ENCODE measurements at regions of chr2 and their contacts with region 1.

Region 1: DNA sequence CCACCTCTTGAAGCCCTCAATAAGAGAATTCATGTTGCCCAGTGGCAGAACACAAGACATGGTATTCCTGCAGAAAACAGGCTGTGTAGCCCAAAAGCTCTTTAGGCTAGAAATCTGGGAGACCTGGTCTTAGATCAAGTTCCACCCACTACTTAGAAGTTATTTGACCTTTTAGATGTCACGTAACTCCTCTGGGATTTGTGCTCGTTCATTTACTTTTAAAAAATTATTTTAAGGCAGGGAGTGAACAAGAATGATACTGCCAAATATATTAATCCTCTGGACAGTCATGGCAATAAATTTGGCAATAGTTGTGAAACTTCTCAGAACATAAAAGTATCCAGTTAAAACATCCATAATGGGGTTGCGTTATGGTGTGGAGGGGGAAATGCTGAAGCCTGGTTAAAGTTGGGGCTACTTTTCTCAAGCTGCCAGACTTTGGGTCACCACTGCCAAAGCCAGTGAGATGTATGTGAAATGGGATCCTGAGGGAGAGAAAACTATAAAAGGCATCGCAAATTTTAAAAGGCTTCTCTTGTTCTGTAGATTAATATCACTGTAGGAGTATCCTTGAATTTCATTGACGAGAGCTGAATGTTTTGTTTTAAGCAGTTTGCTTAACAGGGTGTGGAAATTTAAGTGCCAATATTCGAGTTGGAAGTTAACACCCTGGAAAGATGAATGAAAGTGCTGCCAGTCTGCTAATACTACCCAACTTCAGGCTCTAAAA is 15.8 kb downstream of the DAPL1 start:
- DNase-seq: no peak
- H3K4me3 ChIP-seq: no peak overlapping the region
- H3K27ac ChIP-seq: no peak overlapping the region
- H3K4me1 ChIP-seq: peaks cover 0 to 22% of the 10 kb centered on the region in 2 donors
- H3K27me3 ChIP-seq: no peaks in the 10 kb centered on the region
- CTCF ChIP-seq: no peak

Region 2: DNA sequence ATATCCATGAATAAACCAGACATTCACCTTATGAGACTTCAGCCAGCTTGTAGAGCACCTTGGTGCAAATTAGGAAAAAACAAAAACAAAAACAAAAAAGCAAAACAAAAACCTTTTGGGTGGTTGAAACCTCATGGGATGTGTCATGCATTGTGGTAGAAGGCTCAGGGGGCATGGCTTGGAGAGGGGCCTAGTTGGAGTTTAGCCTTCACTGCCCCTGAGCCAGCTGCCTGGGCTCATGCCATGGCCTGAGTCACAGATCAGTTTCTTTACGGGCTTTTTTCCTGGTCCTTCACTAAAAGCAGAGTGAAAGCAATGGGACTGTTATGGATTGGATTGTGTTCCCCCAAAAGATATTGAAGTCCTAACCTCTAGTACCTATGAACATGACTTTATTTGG is 37.8 kb before region 1 on chr2:
- intact Hi-C with region 1: loop called (anchors 5 kb)
- DNase-seq: peak in 1 of 2 donors; percentile 83
- H3K4me3 ChIP-seq: no peak overlapping the region
- H3K27ac ChIP-seq: peak overlapping the region; percentile 54 to 69
- H3K4me1 ChIP-seq: peaks cover 8 to 40% of the 10 kb centered on the region in 2 donors
- H3K27me3 ChIP-seq: no peaks in the 10 kb centered on the region
- CTCF ChIP-seq: no peak